Posterior vena cava (tissue), 2 donors: ENCODE measurements at regions of chr14 and their contacts with region 1.

Region 1: DNA sequence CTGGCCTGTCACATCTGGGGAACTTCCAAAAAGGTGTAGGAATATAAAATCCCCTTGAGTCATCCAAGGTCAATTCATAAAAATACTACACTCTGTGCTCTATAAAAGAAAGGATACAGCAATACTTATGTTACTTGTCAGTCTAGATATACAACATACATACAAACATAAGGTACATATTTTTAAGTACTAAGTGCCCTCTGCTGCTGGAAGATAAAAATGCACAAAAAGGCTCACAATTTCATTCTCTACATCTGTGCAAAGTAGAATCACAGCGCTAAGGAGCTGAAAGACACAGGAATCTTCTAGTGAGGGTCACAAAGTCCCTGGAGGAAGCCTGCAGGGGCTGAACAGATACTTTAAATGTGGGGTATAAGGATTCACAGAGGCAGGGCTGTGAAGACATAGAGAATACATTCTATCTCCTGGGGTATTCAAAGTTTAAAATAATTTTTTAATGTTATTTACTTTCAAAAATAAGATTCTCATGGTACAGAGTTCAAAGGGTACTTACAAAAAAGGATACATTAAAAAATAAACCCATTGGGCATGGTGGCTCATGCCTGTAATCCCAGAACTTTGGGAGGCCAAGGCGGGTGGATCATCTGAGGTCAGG is 10.2 kb upstream of the GOLGA5 start:
- DNase-seq: no peak

Region 2: GRCh38 chr14:92686900-92687444 is 97.0 kb before region 1 on chr14:
- intact Hi-C with region 1: loop called in 1 of 2 experiments (anchors 10 kb)
- DNase-seq: peak; percentile 94

Region 3: DNA sequence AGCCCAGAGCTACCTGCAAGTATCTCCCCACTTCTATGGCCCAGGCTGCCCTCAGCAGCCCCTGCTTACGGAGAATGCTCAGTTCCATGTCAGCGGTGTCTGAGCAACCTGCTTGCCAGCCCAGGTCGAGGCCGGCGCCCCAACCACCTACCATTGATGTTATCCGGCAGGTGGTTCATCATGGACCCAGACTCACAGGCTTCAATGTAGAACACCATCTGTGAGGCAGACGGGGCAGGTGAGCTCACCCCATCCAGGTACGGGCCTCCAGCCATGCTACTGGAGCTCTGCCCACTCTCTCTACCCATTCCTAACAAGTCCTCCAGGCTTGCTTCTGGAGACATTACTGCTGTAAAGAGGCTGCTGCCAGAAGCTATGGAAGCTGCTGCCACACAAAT is 71.3 kb before region 1 on chr14:
- intact Hi-C with region 1: loop called (anchors 5 to 10 kb)
- DNase-seq: no peak

Region 4: GRCh38 chr14:92719890-92720323 is 64.0 kb before region 1 on chr14:
- intact Hi-C with region 1: loop called in 1 of 2 experiments (anchors 10 kb)
- DNase-seq: peak; percentile 56

Region 5: DNA sequence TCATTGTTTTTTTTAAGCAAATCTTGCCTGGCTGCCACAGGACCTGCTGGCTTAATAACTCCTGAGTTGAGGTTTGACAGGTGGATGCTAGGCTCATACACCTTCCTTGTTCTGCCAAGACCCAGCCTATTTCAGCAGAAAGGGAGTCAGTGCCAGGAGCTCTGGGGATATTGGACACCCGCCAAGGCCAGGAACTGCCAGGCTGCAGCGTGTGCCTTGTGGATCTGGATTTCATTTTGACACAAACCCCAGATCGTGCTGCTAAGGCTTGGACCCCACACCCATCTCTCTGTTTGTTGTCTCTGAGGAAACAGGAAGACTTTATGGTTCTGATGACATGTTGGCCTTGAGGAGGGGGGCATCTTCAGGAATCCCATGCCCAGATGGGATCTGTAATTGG is 1048.7 kb after region 1 on chr14:
- intact Hi-C with region 1: no loop called
- DNase-seq: no peak